Thyroid gland (tissue), 4 donors: ENCODE measurements at regions of chr17 and their contacts with region 1.

Region 1: DNA sequence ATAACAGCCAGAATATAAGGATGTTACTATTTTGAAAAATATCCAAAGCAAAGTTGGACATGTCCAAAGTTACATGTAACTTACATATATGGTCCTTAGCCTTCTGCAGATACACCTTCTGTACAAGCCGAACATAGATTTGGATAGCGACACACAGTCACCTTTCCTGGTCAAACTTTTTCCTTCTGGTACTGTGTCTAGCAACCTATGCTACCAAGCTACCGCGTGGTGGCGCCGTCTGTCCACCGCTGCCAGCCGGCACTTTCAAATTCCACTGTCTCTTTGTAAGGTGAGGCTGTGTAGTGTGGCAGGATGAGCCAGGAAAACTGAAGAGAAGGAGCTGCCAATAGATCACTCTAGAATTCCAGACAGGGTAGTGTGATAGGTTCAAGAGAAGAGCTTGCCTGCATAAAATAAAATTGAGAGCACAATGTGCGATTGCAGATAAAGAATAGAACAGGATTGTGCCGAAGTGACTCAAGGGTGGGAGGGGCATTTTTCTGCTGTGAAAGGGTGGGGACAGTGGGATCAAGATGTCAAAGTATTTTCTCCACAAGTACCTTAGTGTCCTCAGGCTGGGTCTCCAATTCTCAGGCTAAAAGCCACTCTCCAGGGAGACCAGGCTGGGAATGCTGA is 366.9 kb downstream of the SLC39A11 start:
- DNase-seq: peak; percentile 47 to 61
- H3K4me3 ChIP-seq: no peak overlapping the region
- H3K27ac ChIP-seq: no peak overlapping the region
- H3K4me1 ChIP-seq: no peaks in the 10 kb centered on the region
- H3K27me3 ChIP-seq: no peaks in the 10 kb centered on the region
- CTCF ChIP-seq: peak; percentile 35 to 89 (median 68)
- POLR2A ChIP-seq: no peak

Region 2: GRCh38 chr17:73156166-73156840 is 430.8 kb after region 1 on chr17:
- intact Hi-C with region 1: loop called (anchors 5 kb)
- DNase-seq: peak; percentile 71 to 77
- H3K4me3 ChIP-seq: no peak overlapping the region
- H3K27ac ChIP-seq: no peak overlapping the region
- H3K4me1 ChIP-seq: peaks cover 0 to 14% of the 10 kb centered on the region in 2 donors
- H3K27me3 ChIP-seq: no peaks in the 10 kb centered on the region
- CTCF ChIP-seq: peak; percentile 47 to 85 (median 74)
- POLR2A ChIP-seq: no peak

Region 3: GRCh38 chr17:73247726-73248125 is 522.2 kb after region 1 on chr17:
- intact Hi-C with region 1: loop called (anchors 10 kb)
- DNase-seq: no peak
- H3K4me3 ChIP-seq: no peak overlapping the region
- H3K27ac ChIP-seq: no peak overlapping the region
- H3K4me1 ChIP-seq: no peaks in the 10 kb centered on the region
- H3K27me3 ChIP-seq: no peaks in the 10 kb centered on the region
- CTCF ChIP-seq: peak in 1 of 6 experiments; percentile 31
- POLR2A ChIP-seq: no peak

Region 4: GRCh38 chr17:73371285-73371684 is 645.7 kb after region 1 on chr17:
- intact Hi-C with region 1: loop called (anchors 10 kb)
- DNase-seq: no peak
- H3K4me3 ChIP-seq: no peak overlapping the region
- H3K27ac ChIP-seq: no peak overlapping the region
- H3K4me1 ChIP-seq: peaks cover 0 to 5% of the 10 kb centered on the region in 2 donors
- H3K27me3 ChIP-seq: no peaks in the 10 kb centered on the region
- CTCF ChIP-seq: no peak
- POLR2A ChIP-seq: no peak